ENCODE measurements at regions of chr3 and their contacts with region 1.

Region 1: DNA sequence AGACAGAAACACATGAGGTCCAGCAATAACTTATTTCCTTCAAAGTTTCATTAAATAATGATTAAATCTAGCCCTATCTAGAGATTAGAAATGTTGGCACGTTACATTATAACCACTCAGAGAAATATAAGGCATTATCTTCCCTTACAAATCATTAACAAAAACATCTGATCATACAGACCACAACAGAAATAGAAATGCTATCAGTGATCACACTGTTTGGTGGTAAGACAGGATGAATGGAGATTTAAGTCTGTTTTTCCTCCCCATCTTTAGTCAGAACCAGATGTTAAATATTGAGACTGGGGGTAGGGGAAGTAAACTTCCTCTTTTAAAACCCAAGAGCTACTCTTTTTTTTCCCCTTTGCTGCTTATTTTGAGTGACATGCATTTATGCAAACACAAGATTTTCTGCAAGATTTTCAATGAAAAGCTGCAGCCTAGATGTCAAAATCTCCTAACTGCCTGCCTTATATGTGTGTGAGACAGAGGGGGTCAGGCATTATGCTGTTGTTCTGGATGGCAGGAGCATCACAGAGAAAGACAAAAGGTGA is 70.4 kb downstream of the CBLB start:
- DNase-seq: peak; percentile 51
- ATAC-seq: peak; percentile 73
- H3K4me3 ChIP-seq: no peak overlapping the region
- H3K27ac ChIP-seq: peak overlapping the region; percentile 61
- H3K4me1 ChIP-seq: peaks cover 37% of the 10 kb centered on the region
- H3K27me3 ChIP-seq: no peaks in the 10 kb centered on the region
- CTCF ChIP-seq: no peak
- EP300 ChIP-seq: peak; percentile 64 to 73; a peak in 3 of 4 replicates
- POLR2A ChIP-seq: no peak
- RAD21 ChIP-seq: peak; percentile 16; the same call in 1 of the 2 replicates

Region 2: GRCh38 chr3:105774444-105775180 is 23.8 kb before region 1 on chr3:
- CTCF ChIA-PET with region 1: interaction called, 3 read pairs
- POLR2A ChIA-PET with region 1: interaction called, 3 read pairs
- RAD21 ChIA-PET with region 1: interaction called, 6 read pairs
- SMC1A ChIA-PET with region 1: interaction called, 15 read pairs
- in situ Hi-C with region 1: no loop called
- intact Hi-C with region 1: no loop called
- DNase-seq: no peak
- ATAC-seq: peak; percentile 49
- H3K4me3 ChIP-seq: no peak overlapping the region
- H3K27ac ChIP-seq: no peak overlapping the region
- H3K4me1 ChIP-seq: peaks cover 9% of the 10 kb centered on the region; the same call in 1 of the 2 replicates
- H3K27me3 ChIP-seq: no peaks in the 10 kb centered on the region
- CTCF ChIP-seq: no peak
- EP300 ChIP-seq: no peak
- POLR2A ChIP-seq: no peak
- RAD21 ChIP-seq: 0 out of 2 replicates have a peak, but pooled peaks have one; percentile 4

Region 3: GRCh38 chr3:105812194-105812586 is 13.7 kb after region 1 on chr3:
- CTCF ChIA-PET with region 1: interaction called, 3 read pairs
- POLR2A ChIA-PET with region 1: interaction called, 3 read pairs
- RAD21 ChIA-PET with region 1: interaction called, 7 read pairs
- SMC1A ChIA-PET with region 1: interaction called, 48 read pairs
- in situ Hi-C with region 1: no loop called
- intact Hi-C with region 1: no loop called
- DNase-seq: no peak
- ATAC-seq: no peak
- H3K4me3 ChIP-seq: no peak overlapping the region
- H3K27ac ChIP-seq: no peak overlapping the region
- H3K4me1 ChIP-seq: peaks cover 3% of the 10 kb centered on the region; the same call in 1 of the 2 replicates
- H3K27me3 ChIP-seq: no peaks in the 10 kb centered on the region
- CTCF ChIP-seq: no peak
- EP300 ChIP-seq: no peak
- POLR2A ChIP-seq: no peak
- RAD21 ChIP-seq: no peak

Region 4: GRCh38 chr3:105862217-105862616 is 63.8 kb after region 1 on chr3:
- CTCF ChIA-PET with region 1: interaction called, 4 read pairs
- POLR2A ChIA-PET with region 1: interaction called, 3 read pairs
- RAD21 ChIA-PET with region 1: interaction called, 15 read pairs
- SMC1A ChIA-PET with region 1: interaction called, 15 read pairs
- in situ Hi-C with region 1: no loop called
- intact Hi-C with region 1: loop called (anchors 5 kb)
- DNase-seq: peak; percentile 69
- ATAC-seq: peak; percentile 80
- H3K4me3 ChIP-seq: peak overlapping the region; percentile 39
- H3K27ac ChIP-seq: peak overlapping the region; percentile 55
- H3K4me1 ChIP-seq: peaks cover 17% of the 10 kb centered on the region
- H3K27me3 ChIP-seq: no peaks in the 10 kb centered on the region
- CTCF ChIP-seq: no peak
- EP300 ChIP-seq: peak; percentile 79 to 90
- POLR2A ChIP-seq: no peak
- RAD21 ChIP-seq: peak; percentile 32; the same call in 1 of the 2 replicates

Region 5: DNA sequence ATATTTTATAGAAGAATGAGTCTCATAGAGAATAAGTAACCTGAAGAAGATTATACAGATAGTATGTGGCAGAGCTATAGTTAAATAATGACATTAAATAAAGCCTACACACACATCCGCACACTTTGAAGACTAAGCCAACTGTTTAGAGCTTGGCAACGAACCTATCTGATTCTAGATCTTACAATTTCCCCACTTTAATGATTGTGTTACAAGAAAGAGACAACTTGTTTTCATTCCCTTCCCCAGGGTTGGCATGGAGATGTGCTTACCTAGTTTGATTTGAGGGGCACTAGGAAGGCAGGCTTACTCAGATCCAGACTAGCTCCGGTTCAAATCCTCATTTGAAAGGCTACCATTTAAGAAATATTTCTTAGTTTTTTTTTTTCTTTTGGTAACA is 132.3 kb after region 1 on chr3:
- CTCF ChIA-PET with region 1: no interaction called
- POLR2A ChIA-PET with region 1: no interaction called
- RAD21 ChIA-PET with region 1: no interaction called
- SMC1A ChIA-PET with region 1: no interaction called
- in situ Hi-C with region 1: no loop called
- intact Hi-C with region 1: no loop called
- DNase-seq: no peak
- ATAC-seq: no peak
- H3K4me3 ChIP-seq: no peak overlapping the region
- H3K27ac ChIP-seq: no peak overlapping the region
- H3K4me1 ChIP-seq: no peaks in the 10 kb centered on the region
- H3K27me3 ChIP-seq: no peaks in the 10 kb centered on the region
- CTCF ChIP-seq: no peak
- EP300 ChIP-seq: no peak
- POLR2A ChIP-seq: no peak
- RAD21 ChIP-seq: no peak

Region 6: GRCh38 chr3:107727102-107727501 is 1928.6 kb after region 1 on chr3:
- CTCF ChIA-PET with region 1: no interaction called
- POLR2A ChIA-PET with region 1: no interaction called
- RAD21 ChIA-PET with region 1: no interaction called
- SMC1A ChIA-PET with region 1: no interaction called
- in situ Hi-C with region 1: no loop called
- intact Hi-C with region 1: no loop called
- DNase-seq: no peak
- ATAC-seq: no peak
- H3K4me3 ChIP-seq: no peak overlapping the region
- H3K27ac ChIP-seq: no peak overlapping the region
- H3K4me1 ChIP-seq: no peaks in the 10 kb centered on the region
- H3K27me3 ChIP-seq: no peaks in the 10 kb centered on the region
- CTCF ChIP-seq: no peak
- EP300 ChIP-seq: no peak
- POLR2A ChIP-seq: no peak
- RAD21 ChIP-seq: no peak